Right cardiac atrium (tissue), 5 donors: ENCODE measurements at regions of chr10 and their contacts with region 1.

Region 1: GRCh38 chr10:87734987-87735827 is 75.5 kb downstream of the PAPSS2 start:
- DNase-seq: peak in 2 of 3 donors; percentile 22 to 67
- ATAC-seq: peak; percentile 81 to 83
- H3K4me3 ChIP-seq: no peak overlapping the region
- H3K27ac ChIP-seq: peak overlapping the region; percentile 42
- H3K4me1 ChIP-seq: peaks cover 8% of the 10 kb centered on the region
- H3K27me3 ChIP-seq: no peaks in the 10 kb centered on the region

Region 2: DNA sequence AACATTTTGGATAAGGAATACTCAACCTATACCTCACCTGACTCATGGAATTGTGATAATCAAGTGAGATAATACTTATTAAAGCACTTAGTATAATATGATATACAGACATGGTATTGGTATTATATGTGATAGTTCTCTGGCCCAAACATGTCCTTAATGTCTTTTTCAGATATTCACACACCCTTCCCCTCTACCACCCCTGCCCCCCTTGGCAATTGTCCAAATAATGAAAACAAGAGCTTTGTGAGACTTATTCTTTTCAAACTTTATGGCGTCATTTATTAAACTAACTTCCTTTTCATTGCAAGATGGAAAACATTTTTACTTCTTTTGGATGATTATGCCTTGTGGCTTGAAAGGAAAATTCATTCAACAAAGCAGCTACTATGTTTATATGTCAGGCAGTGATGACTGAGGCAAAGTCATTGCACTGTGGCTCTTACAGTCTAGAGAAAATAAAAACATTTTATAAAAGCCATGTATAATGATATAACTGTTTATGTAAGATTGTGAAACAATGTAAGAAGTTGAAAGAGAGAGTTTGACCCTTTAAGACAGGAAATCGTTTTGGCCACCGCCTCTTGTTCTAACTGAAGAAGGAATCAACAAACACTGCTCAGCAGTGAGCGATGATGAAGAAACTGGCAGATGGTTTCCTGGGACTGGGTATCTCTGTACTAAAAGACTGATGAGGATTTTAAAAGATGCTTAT is 203.1 kb before region 1 on chr10:
- intact Hi-C with region 1: loop called in 3 of 4 experiments (anchors 5 to 10 kb)
- DNase-seq: peak in 1 of 3 donors; percentile 20
- ATAC-seq: peak; percentile 90 to 94
- H3K4me3 ChIP-seq: no peak overlapping the region
- H3K27ac ChIP-seq: no peak overlapping the region
- H3K4me1 ChIP-seq: no peaks in the 10 kb centered on the region
- H3K27me3 ChIP-seq: no peaks in the 10 kb centered on the region

Region 3: GRCh38 chr10:87605628-87606308 is 129.4 kb before region 1 on chr10:
- intact Hi-C with region 1: no loop called
- DNase-seq: no peak
- ATAC-seq: peak in 1 of 2 donors; percentile 37
- H3K4me3 ChIP-seq: no peak overlapping the region
- H3K27ac ChIP-seq: no peak overlapping the region
- H3K4me1 ChIP-seq: peaks cover 4% of the 10 kb centered on the region
- H3K27me3 ChIP-seq: no peaks in the 10 kb centered on the region

Region 4: DNA sequence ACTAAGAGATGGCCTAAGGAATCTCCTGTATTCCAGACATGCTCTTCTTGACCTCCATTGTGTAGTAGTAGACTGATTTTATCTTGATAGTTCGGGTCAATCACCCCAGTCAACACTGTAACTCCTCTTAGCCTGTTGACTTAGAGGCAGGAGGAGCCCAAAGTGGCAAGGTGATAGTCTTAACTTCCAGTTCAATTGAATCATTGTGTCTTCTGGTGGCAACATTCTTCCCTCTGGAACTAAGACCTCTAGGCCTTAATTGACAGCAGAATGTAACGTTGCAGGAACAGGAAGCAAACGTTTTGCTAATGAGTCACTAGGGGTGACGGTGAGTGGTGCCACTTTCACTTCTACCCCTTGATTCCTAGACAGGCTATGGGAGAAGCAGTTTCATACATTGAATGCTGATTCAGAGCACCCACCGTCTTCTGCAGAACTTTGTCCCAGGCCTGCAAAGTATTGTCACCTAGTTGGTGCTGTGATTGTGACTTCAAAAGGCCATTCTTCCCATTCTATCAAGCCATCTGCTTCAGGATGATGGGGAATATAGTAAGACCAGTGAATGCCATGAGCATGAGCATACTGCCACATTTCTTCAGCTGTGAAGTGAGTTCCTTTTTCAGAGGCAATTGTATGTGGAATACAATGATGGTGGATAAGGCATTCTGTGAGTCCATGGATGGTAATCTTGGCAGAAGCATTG is 99.4 kb before region 1 on chr10:
- intact Hi-C with region 1: no loop called
- DNase-seq: no peak
- ATAC-seq: no peak
- H3K4me3 ChIP-seq: no peak overlapping the region
- H3K27ac ChIP-seq: no peak overlapping the region
- H3K4me1 ChIP-seq: no peaks in the 10 kb centered on the region
- H3K27me3 ChIP-seq: no peaks in the 10 kb centered on the region

Region 5: GRCh38 chr10:87654212-87654611 is 81.0 kb before region 1 on chr10:
- intact Hi-C with region 1: loop called (anchors 2 to 5 kb)
- DNase-seq: no peak
- ATAC-seq: no peak
- H3K4me3 ChIP-seq: no peak overlapping the region
- H3K27ac ChIP-seq: no peak overlapping the region
- H3K4me1 ChIP-seq: no peaks in the 10 kb centered on the region
- H3K27me3 ChIP-seq: no peaks in the 10 kb centered on the region

Region 6: GRCh38 chr10:87659571-87660483 is 75.4 kb before region 1 on chr10 and contains the start of gene PAPSS2:
- intact Hi-C with region 1: loop called (anchors 2 to 5 kb)
- DNase-seq: peak; percentile 81 to 90 (median 89)
- ATAC-seq: peak; percentile 89 to 93
- H3K4me3 ChIP-seq: peak within 1 kb of the TSS; percentile 97
- H3K27ac ChIP-seq: peak within 1 kb of the TSS; percentile 79
- H3K4me1 ChIP-seq: no peaks in the 10 kb centered on the region
- H3K27me3 ChIP-seq: no peaks in the 10 kb centered on the region
- total RNA-seq, gene PAPSS2: 10.9 to 15.9 (median 14.6) TPM

Region 7: GRCh38 chr10:87675396-87676376 is 59.5 kb before region 1 on chr10:
- intact Hi-C with region 1: no loop called
- DNase-seq: no peak
- ATAC-seq: peak; percentile 24 to 68
- H3K4me3 ChIP-seq: no peak overlapping the region
- H3K27ac ChIP-seq: no peak overlapping the region
- H3K4me1 ChIP-seq: no peaks in the 10 kb centered on the region
- H3K27me3 ChIP-seq: no peaks in the 10 kb centered on the region

Region 8: DNA sequence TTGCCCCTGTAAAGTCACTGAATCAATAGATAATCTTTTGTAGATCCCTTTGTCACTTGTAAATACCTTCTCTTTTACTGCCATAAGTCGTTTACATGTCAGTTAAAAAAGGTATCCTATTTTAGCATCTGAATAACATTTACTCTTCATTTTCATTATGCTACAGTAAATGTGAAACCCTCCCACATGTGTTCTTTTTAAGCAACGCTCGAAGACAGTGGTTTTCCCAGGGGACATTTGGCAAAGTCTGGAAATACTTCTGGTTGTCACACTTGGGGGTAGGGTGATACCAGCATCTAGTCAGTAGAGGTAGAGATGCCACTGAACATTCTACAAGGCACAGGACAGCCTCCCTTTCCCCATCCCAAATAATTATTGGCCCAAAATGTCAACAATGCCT is 59.1 kb after region 1 on chr10:
- intact Hi-C with region 1: no loop called
- DNase-seq: no peak
- ATAC-seq: no peak
- H3K4me3 ChIP-seq: no peak overlapping the region
- H3K27ac ChIP-seq: no peak overlapping the region
- H3K4me1 ChIP-seq: peaks cover 5% of the 10 kb centered on the region
- H3K27me3 ChIP-seq: no peaks in the 10 kb centered on the region